Activated T-helper 1 cell treated with anti-CD3 and anti-CD28 coated beads, Interleukin-12 subunit alpha, Interleukin-12 subunit beta, Interleukin-2, Interleukin-4 antibody, amounts not matched to agents 30 ng/mL and 10 ng/mL and 1 ng/mL, durations not matched to agents 14 hours and 24 hours and 36 hours (primary cell): ENCODE measurements at regions of chr6 and their contacts with region 1.

Region 1: DNA sequence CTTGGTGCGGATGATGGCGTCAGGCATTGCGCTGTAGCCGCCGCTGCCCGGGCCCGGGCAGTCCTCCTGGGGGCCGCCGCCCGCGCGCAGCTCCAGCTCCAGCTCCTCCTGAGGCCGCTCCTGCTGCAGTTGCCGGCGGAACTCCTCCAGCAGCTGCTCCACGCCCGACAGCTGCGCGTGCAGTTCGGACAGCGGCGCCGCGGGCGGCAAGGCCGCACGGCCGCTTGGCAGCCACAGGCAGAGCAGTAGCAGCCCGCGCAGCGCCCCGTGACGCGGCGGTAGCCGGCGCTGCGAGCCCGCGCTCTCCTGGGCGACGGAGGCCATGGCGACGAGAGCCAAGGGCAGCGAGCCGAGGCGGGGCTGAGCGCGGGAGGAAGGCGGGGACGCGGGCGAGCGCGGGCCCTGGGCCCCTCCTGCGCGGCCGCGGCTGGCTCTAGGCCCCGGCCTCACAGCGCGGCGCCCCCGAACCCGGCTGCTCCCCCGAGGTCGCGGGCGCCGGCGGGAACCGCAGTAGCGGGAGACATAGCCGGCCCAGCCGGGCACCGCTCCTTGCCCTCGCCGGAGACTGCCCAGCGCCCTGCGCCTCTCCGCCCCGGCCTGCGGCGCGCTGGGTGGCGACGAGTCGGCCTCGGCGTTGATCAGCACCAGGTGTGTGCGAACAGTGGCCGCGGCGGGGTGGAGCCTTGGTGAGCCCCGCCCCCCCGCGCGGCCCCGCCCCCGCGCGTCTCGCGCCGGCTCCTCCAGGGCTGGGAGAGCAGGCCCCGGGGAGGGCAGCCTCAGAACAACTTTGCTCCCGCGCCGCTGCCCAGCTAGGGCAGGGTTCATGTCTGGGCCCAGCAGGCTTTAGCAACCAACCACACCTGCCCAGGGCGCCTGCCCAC is at the start of gene LRP11:
- DNase-seq: peak; percentile 80
- H3K4me3 Mint-ChIP-seq: peak within 1 kb of the TSS; percentile 80
- H3K27ac Mint-ChIP-seq: no peak within 1 kb of the TSS
- H3K4me1 Mint-ChIP-seq: peaks cover 35% of the 10 kb centered on the region
- H3K27me3 Mint-ChIP-seq: peaks cover 23% of the 10 kb centered on the region
- total RNA-seq, gene LRP11: 3.5 and 5.1 TPM in 2 replicates

Region 2: GRCh38 chr6:149534742-149535141 is 329.2 kb before region 1 on chr6:
- intact Hi-C with region 1: no loop called
- DNase-seq: no peak
- H3K4me3 Mint-ChIP-seq: no peak overlapping the region
- H3K27ac Mint-ChIP-seq: no peak overlapping the region
- H3K4me1 Mint-ChIP-seq: peaks cover 5% of the 10 kb centered on the region
- H3K27me3 Mint-ChIP-seq: no peaks in the 10 kb centered on the region

Region 3: DNA sequence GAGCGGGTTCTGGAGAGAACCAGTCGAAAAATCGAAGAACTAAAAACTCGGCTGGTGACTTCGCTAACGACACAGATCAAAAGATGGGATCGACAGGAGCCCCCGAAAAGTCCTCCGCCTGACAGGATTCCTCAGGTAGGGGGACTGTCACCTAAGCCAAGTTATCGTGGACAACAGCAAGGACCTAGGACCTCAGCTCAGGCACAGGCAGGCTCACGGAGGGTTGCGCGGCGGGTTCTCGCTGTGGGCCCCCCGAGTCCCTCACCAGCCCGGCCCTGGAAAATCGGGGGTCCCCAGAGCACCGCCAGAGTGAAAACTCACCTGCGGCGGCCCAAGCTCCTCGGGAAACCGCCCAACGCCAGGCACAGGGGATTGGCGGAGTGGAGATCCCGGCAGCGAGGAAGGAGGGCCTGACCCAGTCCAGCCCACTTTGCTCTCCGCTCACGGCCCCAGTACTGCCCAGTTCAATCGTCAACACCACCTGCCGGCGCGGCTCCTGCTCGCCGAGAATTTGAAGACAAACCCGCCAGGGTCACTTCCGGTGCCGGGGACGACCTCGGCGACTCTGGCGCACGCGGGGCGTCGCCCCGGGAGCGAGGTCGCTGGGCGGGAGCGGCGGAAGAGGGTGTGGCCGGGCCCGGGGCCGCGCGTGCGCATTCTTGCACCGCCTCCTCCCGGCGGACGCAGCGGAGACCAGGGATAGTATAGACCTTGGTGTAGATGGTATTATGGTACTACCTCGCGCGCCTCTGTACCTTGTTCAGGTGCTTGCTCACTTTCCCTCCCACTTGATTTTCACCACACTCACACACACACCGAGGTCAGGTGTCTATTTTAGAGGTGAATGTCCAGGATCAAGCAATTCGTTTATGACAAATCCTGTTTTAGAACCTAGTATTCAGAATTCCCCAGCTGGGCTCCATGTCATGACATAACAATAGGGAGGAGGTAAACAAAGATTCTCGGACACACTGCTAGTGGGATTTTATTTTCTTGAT is 215.5 kb before region 1 on chr6 and contains the start of gene KATNA1:
- intact Hi-C with region 1: loop called (anchors 1 kb)
- DNase-seq: peak; percentile 89
- H3K4me3 Mint-ChIP-seq: peak within 1 kb of the TSS; percentile 96
- H3K27ac Mint-ChIP-seq: peak within 1 kb of the TSS; percentile 83
- H3K4me1 Mint-ChIP-seq: peaks cover 31% of the 10 kb centered on the region
- H3K27me3 Mint-ChIP-seq: no peaks in the 10 kb centered on the region
- total RNA-seq, gene KATNA1: 20.8 and 22.1 TPM in 2 replicates

Region 4: DNA sequence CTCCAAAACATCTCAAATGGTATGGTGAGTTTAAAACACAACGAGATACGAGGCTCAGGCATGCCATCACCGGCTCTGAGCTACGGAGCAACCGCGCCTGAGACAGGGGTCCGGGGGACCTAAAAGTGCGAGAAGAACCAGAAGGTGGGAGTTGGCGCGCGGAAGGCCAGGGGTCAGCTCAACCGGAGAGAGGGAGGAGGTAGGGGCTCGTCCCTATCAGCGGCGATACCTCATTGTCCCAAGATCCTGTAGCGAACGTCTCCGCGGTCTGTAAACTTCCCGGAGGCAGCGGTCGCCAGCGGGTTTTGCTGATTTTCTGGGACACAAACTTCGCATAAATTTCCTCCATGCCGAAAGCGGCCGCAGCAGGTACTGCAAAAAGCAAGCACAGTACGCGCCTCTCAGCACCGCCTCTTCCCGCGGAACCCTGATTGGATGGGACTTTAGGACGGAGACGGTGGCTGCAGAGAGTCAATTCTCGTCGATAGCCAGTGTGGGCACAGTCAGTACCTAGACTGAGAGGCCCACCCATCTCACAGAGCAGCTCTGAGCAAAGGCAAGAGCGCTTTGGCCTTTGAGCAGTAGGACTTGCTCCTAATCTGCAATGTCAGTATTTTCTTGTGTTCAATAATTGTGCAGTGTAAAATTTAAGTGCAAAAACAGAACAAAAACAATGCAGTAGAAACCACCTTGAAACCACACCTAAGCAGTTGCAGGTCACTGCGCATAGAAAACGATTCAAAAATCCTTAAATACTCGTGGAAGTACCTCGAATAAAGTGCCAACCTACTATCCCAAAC is 117.6 kb before region 1 on chr6 and contains the start of gene NUP43:
- intact Hi-C with region 1: loop called (anchors 2 kb)
- DNase-seq: peak; percentile 90
- H3K4me3 Mint-ChIP-seq: peak within 1 kb of the TSS; percentile 99
- H3K27ac Mint-ChIP-seq: peak within 1 kb of the TSS; percentile 87
- H3K4me1 Mint-ChIP-seq: peaks cover 31% of the 10 kb centered on the region
- H3K27me3 Mint-ChIP-seq: no peaks in the 10 kb centered on the region
- total RNA-seq, gene NUP43: 81.3 and 90.5 TPM in 2 replicates

Region 5: GRCh38 chr6:149840345-149841075 is 23.4 kb before region 1 on chr6:
- intact Hi-C with region 1: loop called (anchors 1 kb)
- DNase-seq: peak; percentile 26
- H3K4me3 Mint-ChIP-seq: no peak overlapping the region
- H3K27ac Mint-ChIP-seq: no peak overlapping the region
- H3K4me1 Mint-ChIP-seq: no peaks in the 10 kb centered on the region
- H3K27me3 Mint-ChIP-seq: peaks cover 11% of the 10 kb centered on the region

Region 6: GRCh38 chr6:149974825-149975224 is 110.9 kb after region 1 on chr6:
- intact Hi-C with region 1: no loop called
- DNase-seq: no peak
- H3K4me3 Mint-ChIP-seq: no peak overlapping the region
- H3K27ac Mint-ChIP-seq: no peak overlapping the region
- H3K4me1 Mint-ChIP-seq: no peaks in the 10 kb centered on the region
- H3K27me3 Mint-ChIP-seq: peaks cover 51% of the 10 kb centered on the region

Region 7: GRCh38 chr6:150004783-150005717 is 141.1 kb after region 1 on chr6:
- intact Hi-C with region 1: loop called (anchors 1 kb)
- DNase-seq: peak; percentile 92
- H3K4me3 Mint-ChIP-seq: peak overlapping the region; percentile 82
- H3K27ac Mint-ChIP-seq: peak overlapping the region; percentile 87
- H3K4me1 Mint-ChIP-seq: peaks cover 62% of the 10 kb centered on the region
- H3K27me3 Mint-ChIP-seq: peaks cover 22% of the 10 kb centered on the region

Region 8: GRCh38 chr6:150511313-150511712 is 647.4 kb after region 1 on chr6:
- intact Hi-C with region 1: no loop called
- DNase-seq: no peak
- H3K4me3 Mint-ChIP-seq: no peak overlapping the region
- H3K27ac Mint-ChIP-seq: no peak overlapping the region
- H3K4me1 Mint-ChIP-seq: no peaks in the 10 kb centered on the region
- H3K27me3 Mint-ChIP-seq: peaks cover 5% of the 10 kb centered on the region